Caco-2 (cell line): ENCODE measurements at regions of chr17 and their contacts with region 1.

Region 1: GRCh38 chr17:1783834-1784611 is 22.2 kb downstream of the SERPINF1 start:
- DNase-seq: peak in 1 of 2 experiments; percentile 62
- H3K4me3 ChIP-seq: no peak overlapping the region
- H3K4me3 Mint-ChIP-seq: no peak overlapping the region
- H3K27ac Mint-ChIP-seq: peak overlapping the region; percentile 44
- H3K4me1 ChIP-seq: peaks cover 4% of the 10 kb centered on the region; the same call in 1 of the 2 replicates
- H3K4me1 Mint-ChIP-seq: no peaks in the 10 kb centered on the region
- H3K27me3 ChIP-seq: no peaks in the 10 kb centered on the region
- H3K27me3 Mint-ChIP-seq: no peaks in the 10 kb centered on the region
- CTCF ChIP-seq: peak; percentile 82 to 90

Region 2: GRCh38 chr17:1673041-1673785 is 110.8 kb before region 1 on chr17:
- CTCF ChIA-PET with region 1: interaction called, 4 read pairs
- POLR2A ChIA-PET with region 1: no interaction called
- intact Hi-C with region 1: loop called (anchors 1 kb)
- DNase-seq: no peak
- H3K4me3 ChIP-seq: no peak overlapping the region
- H3K4me3 Mint-ChIP-seq: no peak overlapping the region
- H3K27ac Mint-ChIP-seq: no peak overlapping the region
- H3K4me1 ChIP-seq: no peaks in the 10 kb centered on the region
- H3K4me1 Mint-ChIP-seq: peaks cover 23% of the 10 kb centered on the region
- H3K27me3 ChIP-seq: no peaks in the 10 kb centered on the region
- H3K27me3 Mint-ChIP-seq: no peaks in the 10 kb centered on the region
- CTCF ChIP-seq: no peak

Region 3: DNA sequence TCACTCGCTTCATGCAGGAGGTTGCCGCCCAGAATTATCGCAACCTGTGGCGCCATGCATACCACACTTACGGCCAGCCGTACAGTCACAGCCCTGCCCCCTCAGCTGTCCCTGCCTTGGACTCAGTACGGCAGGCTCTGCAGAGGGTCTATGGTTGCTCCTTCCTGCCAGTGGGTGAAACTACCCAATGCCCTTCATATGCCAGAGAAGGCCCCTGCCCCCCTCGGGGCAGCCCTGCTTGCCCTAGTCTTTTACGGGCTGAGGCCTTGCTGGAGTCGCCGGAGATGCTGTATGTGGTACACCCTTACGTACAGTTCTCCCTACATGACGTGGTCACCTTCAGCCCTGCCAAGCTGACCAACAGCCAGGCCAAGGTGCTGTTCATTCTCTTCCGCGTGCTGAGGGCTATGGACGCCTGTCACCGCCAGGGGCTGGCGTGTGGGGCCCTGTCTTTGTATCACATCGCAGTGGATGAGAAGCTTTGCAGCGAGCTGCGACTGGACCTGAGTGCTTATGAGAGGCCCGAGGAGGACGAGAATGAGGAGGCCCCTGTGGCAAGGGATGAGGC is 58.6 kb before region 1 on chr17:
- CTCF ChIA-PET with region 1: interaction called, 40 read pairs
- POLR2A ChIA-PET with region 1: no interaction called
- intact Hi-C with region 1: loop called (anchors 1 kb)
- DNase-seq: no peak
- H3K4me3 ChIP-seq: peak overlapping the region; percentile 61
- H3K4me3 Mint-ChIP-seq: peak overlapping the region; percentile 71
- H3K27ac Mint-ChIP-seq: no peak overlapping the region
- H3K4me1 ChIP-seq: peaks cover 7% of the 10 kb centered on the region
- H3K4me1 Mint-ChIP-seq: no peaks in the 10 kb centered on the region
- H3K27me3 ChIP-seq: no peaks in the 10 kb centered on the region
- H3K27me3 Mint-ChIP-seq: no peaks in the 10 kb centered on the region
- CTCF ChIP-seq: no peak

Region 4: DNA sequence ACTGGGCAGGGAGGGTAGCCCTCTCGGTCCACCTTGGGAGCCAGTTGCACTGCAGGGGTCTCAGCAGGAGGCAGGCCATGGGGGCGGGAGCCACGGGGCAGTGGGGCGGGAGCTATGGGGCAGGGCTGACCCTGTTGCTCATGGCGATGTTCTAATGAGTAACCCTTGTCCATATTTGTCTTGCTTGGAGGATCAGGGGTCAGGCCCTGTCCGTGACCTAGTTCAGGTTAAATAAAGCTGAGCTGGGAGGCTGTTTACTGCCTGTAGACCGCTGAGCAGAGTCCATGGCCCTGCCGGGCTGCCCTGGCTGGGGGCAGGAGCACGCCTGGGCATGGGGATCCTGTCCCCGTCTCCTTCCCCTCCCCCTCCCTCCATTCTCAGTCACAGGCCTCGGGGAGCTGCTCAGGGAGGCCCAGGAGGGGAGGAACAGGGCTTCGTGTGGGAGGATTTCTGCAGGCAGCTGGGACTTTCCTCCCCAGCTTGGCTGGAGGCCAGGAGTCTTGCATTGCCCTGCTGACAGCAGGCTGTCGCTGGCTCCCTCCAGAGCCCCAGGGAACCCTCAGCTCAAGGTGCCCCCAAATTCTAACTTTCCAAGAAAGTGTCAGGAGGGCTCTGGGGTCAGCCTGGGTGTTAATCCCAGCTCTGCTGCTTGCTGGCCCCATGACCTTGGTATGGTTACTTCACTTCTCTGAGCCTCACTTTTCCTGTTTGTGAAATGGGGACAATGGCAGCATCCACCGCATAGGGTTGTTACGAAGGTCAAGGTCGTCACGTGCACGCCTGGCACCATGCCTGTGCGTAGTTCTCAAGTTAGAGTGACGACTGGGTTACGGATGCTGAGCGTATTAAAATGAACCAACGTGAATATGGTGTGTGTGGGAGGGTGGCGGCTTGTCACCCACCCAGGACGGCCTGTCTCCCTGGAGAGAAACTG is 47.4 kb before region 1 on chr17:
- CTCF ChIA-PET with region 1: interaction called, 10 read pairs
- POLR2A ChIA-PET with region 1: interaction called, 3 read pairs
- intact Hi-C with region 1: no loop called
- DNase-seq: peak; percentile 82 to 88
- H3K4me3 ChIP-seq: no peak overlapping the region
- H3K4me3 Mint-ChIP-seq: peak overlapping the region; percentile 24
- H3K27ac Mint-ChIP-seq: peak overlapping the region; percentile 75
- H3K4me1 ChIP-seq: peaks cover 23% of the 10 kb centered on the region
- H3K4me1 Mint-ChIP-seq: peaks cover 18% of the 10 kb centered on the region
- H3K27me3 ChIP-seq: no peaks in the 10 kb centered on the region
- H3K27me3 Mint-ChIP-seq: no peaks in the 10 kb centered on the region
- CTCF ChIP-seq: no peak

Region 5: DNA sequence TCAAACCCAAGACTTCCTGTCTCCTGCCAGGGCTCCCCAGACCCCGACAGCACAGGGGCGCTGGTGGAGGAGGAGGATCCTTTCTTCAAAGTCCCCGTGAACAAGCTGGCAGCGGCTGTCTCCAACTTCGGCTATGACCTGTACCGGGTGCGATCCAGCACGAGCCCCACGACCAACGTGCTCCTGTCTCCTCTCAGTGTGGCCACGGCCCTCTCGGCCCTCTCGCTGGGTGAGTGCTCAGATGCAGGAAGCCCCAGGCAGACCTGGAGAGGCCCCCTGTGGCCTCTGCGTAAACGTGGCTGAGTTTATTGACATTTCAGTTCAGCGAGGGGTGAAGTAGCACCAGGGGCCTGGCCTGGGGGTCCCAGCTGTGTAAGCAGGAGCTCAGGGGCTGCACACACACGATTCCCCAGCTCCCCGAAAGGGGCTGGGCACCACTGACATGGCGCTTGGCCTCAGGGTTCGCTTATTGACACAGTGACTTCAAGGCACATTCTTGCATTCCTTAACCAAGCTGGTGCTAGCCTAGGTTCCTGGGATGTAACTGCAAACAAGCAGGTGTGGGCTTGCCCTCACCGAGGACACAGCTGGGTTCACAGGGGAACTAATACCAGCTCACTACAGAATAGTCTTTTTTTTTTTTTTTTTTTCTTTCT is 14.1 kb before region 1 on chr17:
- CTCF ChIA-PET with region 1: interaction called, 19 read pairs
- POLR2A ChIA-PET with region 1: interaction called, 6 read pairs
- intact Hi-C with region 1: no loop called
- DNase-seq: peak; percentile 91 to 96
- H3K4me3 ChIP-seq: no peak overlapping the region
- H3K4me3 Mint-ChIP-seq: peak overlapping the region; percentile 47
- H3K27ac Mint-ChIP-seq: peak overlapping the region; percentile 98
- H3K4me1 ChIP-seq: peaks cover 32% of the 10 kb centered on the region
- H3K4me1 Mint-ChIP-seq: peaks cover 14% of the 10 kb centered on the region
- H3K27me3 ChIP-seq: no peaks in the 10 kb centered on the region
- H3K27me3 Mint-ChIP-seq: no peaks in the 10 kb centered on the region
- CTCF ChIP-seq: no peak